CD8-positive, alpha-beta memory T cell (primary cell): ENCODE measurements at regions of chr1 and their contacts with region 1.

Region 1: GRCh38 chr1:246002725-246003441 is 504.2 kb downstream of the SMYD3 start:
- DNase-seq: peak; percentile 62 to 87 (median 67)
- H3K4me3 ChIP-seq: no peak overlapping the region
- H3K4me3 Mint-ChIP-seq: no peak overlapping the region
- H3K27ac ChIP-seq: no peak overlapping the region
- H3K27ac Mint-ChIP-seq: peak overlapping the region in 1 of 8 donors; percentile 57
- H3K4me1 ChIP-seq: no peaks in the 10 kb centered on the region
- H3K4me1 Mint-ChIP-seq: no peaks in the 10 kb centered on the region
- H3K27me3 ChIP-seq: no peaks in the 10 kb centered on the region
- H3K27me3 Mint-ChIP-seq: peaks cover 0 to 1% of the 10 kb centered on the region in 2 donors

Region 2: GRCh38 chr1:245153081-245153551 is 849.8 kb before region 1 on chr1:
- CTCF ChIA-PET with region 1: interaction called, 12 read pairs
- POLR2A ChIA-PET with region 1: no interaction called
- DNase-seq: peak; percentile 26 to 72 (median 58)
- H3K4me3 ChIP-seq: peak overlapping the region; percentile 76
- H3K4me3 Mint-ChIP-seq: peak overlapping the region; percentile 83 to 91 (median 86)
- H3K27ac ChIP-seq: no peak overlapping the region
- H3K27ac Mint-ChIP-seq: peak overlapping the region in 1 of 8 donors; percentile 27
- H3K4me1 ChIP-seq: peaks cover 23% of the 10 kb centered on the region
- H3K4me1 Mint-ChIP-seq: peaks cover 22 to 33% (median 30%) of the 10 kb centered on the region in 3 donors
- H3K27me3 ChIP-seq: peaks cover 30% of the 10 kb centered on the region
- H3K27me3 Mint-ChIP-seq: peaks cover 40 to 74% of the 10 kb centered on the region in 2 donors

Region 3: DNA sequence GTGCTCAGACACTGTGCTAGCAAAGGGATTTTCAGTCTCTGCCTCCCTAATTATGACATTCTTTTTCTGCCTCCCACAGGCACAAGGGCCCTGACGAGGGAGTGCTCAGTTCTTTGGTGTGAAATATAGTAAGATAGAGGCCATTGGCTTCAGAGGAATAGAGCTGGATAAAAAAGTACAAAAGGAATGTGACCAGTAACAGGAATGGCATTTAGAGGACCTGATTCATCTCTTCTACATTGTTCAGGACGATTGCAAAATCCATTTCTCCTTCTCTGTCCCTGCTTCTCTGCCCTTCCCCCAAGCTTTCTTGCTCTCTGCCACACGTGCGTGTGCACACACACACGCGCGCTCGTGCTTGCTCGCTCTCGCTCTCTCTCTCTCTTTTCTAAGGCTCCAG is 179.9 kb before region 1 on chr1:
- CTCF ChIA-PET with region 1: no interaction called
- POLR2A ChIA-PET with region 1: no interaction called
- DNase-seq: no peak
- H3K4me3 ChIP-seq: no peak overlapping the region
- H3K4me3 Mint-ChIP-seq: no peak overlapping the region
- H3K27ac ChIP-seq: no peak overlapping the region
- H3K27ac Mint-ChIP-seq: peak overlapping the region in 1 of 8 donors; percentile 34
- H3K4me1 ChIP-seq: no peaks in the 10 kb centered on the region
- H3K4me1 Mint-ChIP-seq: no peaks in the 10 kb centered on the region
- H3K27me3 ChIP-seq: no peaks in the 10 kb centered on the region
- H3K27me3 Mint-ChIP-seq: no peaks in the 10 kb centered on the region

Region 4: DNA sequence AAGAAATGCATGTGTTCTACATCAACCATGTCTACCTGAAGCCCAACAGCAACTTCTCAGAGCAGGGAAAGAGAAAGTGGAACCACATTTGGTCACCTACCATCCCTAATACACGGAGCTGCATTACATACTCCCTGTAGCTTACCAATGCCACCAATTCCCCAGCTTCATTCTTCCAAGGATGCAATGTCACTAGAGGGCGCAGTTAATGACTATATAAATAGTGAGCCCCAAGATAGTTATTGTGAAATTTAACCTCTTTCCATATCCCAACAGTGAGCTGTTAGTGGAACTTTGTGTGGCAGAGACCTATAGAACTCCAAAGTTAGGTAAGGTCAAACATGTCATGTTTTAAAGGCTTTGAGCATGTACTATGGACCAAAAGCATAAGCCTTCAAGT is 114.1 kb before region 1 on chr1:
- CTCF ChIA-PET with region 1: interaction called, 17 read pairs
- POLR2A ChIA-PET with region 1: no interaction called
- DNase-seq: peak in 1 of 5 donors; percentile 9
- H3K4me3 ChIP-seq: no peak overlapping the region
- H3K4me3 Mint-ChIP-seq: no peak overlapping the region
- H3K27ac ChIP-seq: no peak overlapping the region
- H3K27ac Mint-ChIP-seq: no peak overlapping the region
- H3K4me1 ChIP-seq: no peaks in the 10 kb centered on the region
- H3K4me1 Mint-ChIP-seq: no peaks in the 10 kb centered on the region
- H3K27me3 ChIP-seq: no peaks in the 10 kb centered on the region
- H3K27me3 Mint-ChIP-seq: no peaks in the 10 kb centered on the region